ENCODE measurements at regions of chr12 and their contacts with region 1.

Region 1: DNA sequence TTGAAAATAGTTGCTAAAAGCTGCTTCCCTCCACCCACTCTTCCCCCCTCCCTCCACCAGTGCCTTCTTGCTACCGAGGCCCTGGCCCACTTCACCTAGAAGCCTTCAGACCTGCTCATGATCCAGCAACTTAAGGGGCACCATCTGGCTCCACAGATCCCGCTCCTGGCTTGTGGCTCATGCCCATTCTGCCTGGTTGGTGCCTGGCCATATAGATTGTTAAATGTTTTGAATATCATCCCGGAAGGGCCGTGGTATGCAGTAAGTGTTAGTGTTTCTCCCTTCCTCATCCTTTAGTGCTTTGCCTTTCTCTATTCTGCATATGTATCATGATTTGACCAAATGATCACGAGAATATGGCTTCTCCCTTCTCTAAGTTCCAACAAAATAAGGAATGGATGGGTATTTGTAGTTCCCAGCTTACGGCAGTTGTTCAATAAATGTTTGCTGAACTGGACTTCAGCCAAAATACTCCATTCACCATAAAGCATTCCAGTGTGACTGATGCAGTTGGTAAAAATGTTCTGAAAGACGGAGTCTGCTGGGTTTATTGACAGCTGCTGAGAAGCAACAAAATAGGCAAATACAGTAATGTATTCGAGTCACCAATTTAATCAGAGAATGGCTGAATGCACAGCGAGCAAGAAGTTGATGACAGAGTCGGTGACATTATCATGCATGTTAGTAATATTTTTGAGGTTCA is 30.7 kb downstream of the GRIP1 start:
- DNase-seq: peak; percentile 16
- H3K4me3 Mint-ChIP-seq: peak overlapping the region; percentile 59
- H3K27ac Mint-ChIP-seq: peak overlapping the region; percentile 88
- H3K4me1 Mint-ChIP-seq: peaks cover 37% of the 10 kb centered on the region
- H3K27me3 Mint-ChIP-seq: no peaks in the 10 kb centered on the region
- CTCF ChIP-seq: no peak

Region 2: GRCh38 chr12:66633676-66634075 is 14.5 kb before region 1 on chr12:
- CTCF ChIA-PET with region 1: interaction called, 3 read pairs
- intact Hi-C with region 1: loop called (anchors 2 kb)
- DNase-seq: peak; percentile 15
- H3K4me3 Mint-ChIP-seq: no peak overlapping the region
- H3K27ac Mint-ChIP-seq: peak overlapping the region; percentile 36
- H3K4me1 Mint-ChIP-seq: peaks cover 59% of the 10 kb centered on the region
- H3K27me3 Mint-ChIP-seq: no peaks in the 10 kb centered on the region
- CTCF ChIP-seq: no peak

Region 3: DNA sequence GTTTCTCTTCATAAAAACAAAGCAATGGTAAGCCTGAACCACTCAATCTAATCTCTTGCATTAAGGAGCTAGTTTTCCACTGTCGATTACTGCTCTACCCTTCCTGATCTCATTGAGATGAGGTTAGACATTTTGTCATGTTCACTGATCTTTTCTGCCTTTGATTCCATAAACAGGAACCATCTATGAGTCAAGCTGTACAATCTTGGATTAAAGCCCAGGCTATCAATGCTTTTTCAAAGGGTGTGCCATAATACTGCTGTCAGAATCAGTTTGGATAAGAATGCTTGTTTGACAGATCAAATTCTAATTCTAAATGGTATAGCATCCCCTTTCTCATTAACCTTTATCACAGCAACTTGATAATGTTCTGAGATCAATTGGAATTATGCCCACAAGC is 14.5 kb after region 1 on chr12:
- CTCF ChIA-PET with region 1: interaction called, 3 read pairs
- intact Hi-C with region 1: loop called (anchors 2 kb)
- DNase-seq: no peak
- H3K4me3 Mint-ChIP-seq: peak overlapping the region; percentile 0
- H3K27ac Mint-ChIP-seq: peak overlapping the region; percentile 24
- H3K4me1 Mint-ChIP-seq: peaks cover 38% of the 10 kb centered on the region
- H3K27me3 Mint-ChIP-seq: no peaks in the 10 kb centered on the region
- CTCF ChIP-seq: no peak

Measured in Calu3 (cell line).